Dorsolateral prefrontal cortex (tissue), 120 donors: ENCODE measurements at regions of chrX and their contacts with region 1.

Region 1: GRCh38 chrX:50054145-50054544 is 131.7 kb downstream of the CLCN5 start:
- DNase-seq: no peak
- H3K4me3 ChIP-seq: no peak overlapping the region
- H3K27ac ChIP-seq: no peak overlapping the region
- H3K27me3 ChIP-seq: peaks cover 0 to 68% (median 18%) of the 10 kb centered on the region in 45 donors
- CTCF ChIP-seq: no peak

Region 2: DNA sequence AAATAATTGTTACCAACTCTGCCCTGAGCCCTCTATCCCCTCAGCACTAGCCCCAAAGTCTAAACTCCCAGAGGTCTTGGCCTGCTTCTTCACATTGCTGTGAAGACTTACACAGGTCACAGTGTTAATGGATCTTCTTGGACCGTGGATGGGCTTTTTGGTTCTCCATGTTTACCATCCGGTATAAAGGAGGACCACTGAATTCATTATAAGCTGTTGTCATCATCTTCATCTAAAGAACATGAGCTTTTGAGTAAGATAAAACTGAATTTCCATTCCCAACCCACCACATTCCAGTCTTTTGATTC is 1433.8 kb after region 1 on chrX:
- intact Hi-C with region 1: loop called in 1 of 2 experiments (anchors 10 kb)
- DNase-seq: no peak
- H3K4me3 ChIP-seq: no peak overlapping the region
- H3K27ac ChIP-seq: no peak overlapping the region
- H3K27me3 ChIP-seq: peaks cover 0 to 94% (median 32%) of the 10 kb centered on the region in 45 donors
- CTCF ChIP-seq: peak in 2 of 56 donors; percentile 3 to 8